BJ (cell line): ENCODE measurements at regions of chr11 and their contacts with region 1.

Region 1: DNA sequence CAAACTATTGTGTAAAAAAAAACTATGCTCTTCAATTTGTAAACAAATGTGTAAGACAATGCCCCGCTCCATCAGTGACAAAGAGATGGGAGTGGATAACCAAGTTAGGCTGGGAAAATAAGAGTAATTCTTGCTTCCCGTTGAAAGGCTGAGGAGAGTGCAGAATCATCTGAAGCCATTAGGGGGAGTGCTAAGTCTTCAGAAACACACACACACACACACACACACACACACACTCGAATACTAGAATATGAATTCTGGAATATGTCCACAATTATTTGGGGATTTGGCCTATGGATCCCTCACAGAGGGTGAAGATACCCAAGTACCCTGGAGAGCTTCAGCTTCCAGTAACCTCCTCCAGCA is 27.8 kb upstream of the ROBO3 start:
- DNase-seq: peak; percentile 31
- H3K4me3 ChIP-seq: no peak overlapping the region
- H3K27me3 ChIP-seq: peaks cover 34% of the 10 kb centered on the region
- CTCF ChIP-seq: peak; percentile 76

Region 2: DNA sequence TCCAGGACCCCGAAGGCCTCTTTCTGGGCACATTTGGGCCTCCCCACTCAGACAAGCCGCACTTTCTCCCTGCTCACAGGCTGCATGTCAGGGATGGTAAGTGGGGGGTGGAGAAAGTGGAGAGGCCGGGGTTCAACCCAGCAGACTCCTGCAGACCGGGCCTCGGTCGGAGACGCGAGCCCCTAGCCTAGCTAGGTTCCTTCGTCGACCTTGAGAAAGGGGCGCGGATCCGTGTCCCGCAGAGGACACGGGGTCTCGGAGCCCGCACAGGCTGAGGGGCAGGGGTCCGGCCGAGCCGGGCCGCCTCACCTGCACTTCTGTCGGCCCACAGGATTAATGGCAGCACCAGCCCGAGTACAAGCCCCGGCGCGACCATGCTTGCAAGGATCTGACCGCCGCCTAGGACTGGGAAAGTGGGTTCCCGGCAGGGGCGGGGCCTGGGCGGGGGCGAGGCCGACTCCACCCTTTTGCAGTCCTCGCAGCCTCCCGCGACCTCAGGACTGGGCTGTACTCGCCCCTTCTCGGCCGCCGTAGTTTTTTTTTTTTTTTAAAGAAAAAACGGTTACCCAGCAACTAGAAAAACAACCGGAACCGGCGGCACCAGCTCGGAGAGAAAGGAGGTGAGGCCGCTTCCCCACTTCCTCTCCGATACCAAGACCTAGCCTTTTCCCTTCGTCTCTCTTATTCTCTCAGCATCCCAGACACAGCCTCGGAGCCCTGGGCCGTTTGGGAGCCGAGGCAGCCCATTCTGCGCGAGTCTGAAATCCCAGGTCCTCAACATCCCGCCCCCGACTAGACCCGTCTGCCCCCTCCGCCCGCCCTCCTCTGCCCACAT is 163.9 kb before region 1 on chr11 and contains the starts of genes SIAE and SPA17:
- CTCF ChIA-PET with region 1: interaction called, 65 read pairs
- POLR2A ChIA-PET with region 1: no interaction called
- DNase-seq: peak; percentile 79
- H3K4me3 ChIP-seq: peak within 1 kb of the TSS; percentile 96
- H3K27me3 ChIP-seq: no peaks in the 10 kb centered on the region; the same call in 1 of the 2 replicates
- CTCF ChIP-seq: no peak
- polyA plus RNA-seq, gene SIAE: 42.1 and 43.8 TPM in 2 replicates
- polyA plus RNA-seq, gene SPA17: 2.9 and 12.1 TPM in 2 replicates

Region 3: GRCh38 chr11:124800226-124800929 is 37.1 kb before region 1 on chr11 and contains the start of gene MSANTD2:
- CTCF ChIA-PET with region 1: interaction called, 15 read pairs
- POLR2A ChIA-PET with region 1: no interaction called
- DNase-seq: no peak
- H3K4me3 ChIP-seq: peak within 1 kb of the TSS; percentile 89
- H3K27me3 ChIP-seq: no peaks in the 10 kb centered on the region
- CTCF ChIP-seq: no peak
- polyA plus RNA-seq, gene MSANTD2: 3.4 and 5.7 TPM in 2 replicates

Region 4: GRCh38 chr11:124855437-124855836 is 18.0 kb after region 1 on chr11:
- CTCF ChIA-PET with region 1: interaction called, 11 read pairs
- POLR2A ChIA-PET with region 1: no interaction called
- DNase-seq: no peak
- H3K4me3 ChIP-seq: no peak overlapping the region
- H3K27me3 ChIP-seq: peaks cover 13% of the 10 kb centered on the region
- CTCF ChIP-seq: no peak